ENCODE measurements at regions of chr5 and their contacts with region 1.

Region 1: GRCh38 chr5:179907570-179908324 is at the start of gene TBC1D9B:
- DNase-seq: peak; percentile 90
- ATAC-seq: peak; percentile 90
- total RNA-seq, gene TBC1D9B: 37.1 TPM

Region 2: DNA sequence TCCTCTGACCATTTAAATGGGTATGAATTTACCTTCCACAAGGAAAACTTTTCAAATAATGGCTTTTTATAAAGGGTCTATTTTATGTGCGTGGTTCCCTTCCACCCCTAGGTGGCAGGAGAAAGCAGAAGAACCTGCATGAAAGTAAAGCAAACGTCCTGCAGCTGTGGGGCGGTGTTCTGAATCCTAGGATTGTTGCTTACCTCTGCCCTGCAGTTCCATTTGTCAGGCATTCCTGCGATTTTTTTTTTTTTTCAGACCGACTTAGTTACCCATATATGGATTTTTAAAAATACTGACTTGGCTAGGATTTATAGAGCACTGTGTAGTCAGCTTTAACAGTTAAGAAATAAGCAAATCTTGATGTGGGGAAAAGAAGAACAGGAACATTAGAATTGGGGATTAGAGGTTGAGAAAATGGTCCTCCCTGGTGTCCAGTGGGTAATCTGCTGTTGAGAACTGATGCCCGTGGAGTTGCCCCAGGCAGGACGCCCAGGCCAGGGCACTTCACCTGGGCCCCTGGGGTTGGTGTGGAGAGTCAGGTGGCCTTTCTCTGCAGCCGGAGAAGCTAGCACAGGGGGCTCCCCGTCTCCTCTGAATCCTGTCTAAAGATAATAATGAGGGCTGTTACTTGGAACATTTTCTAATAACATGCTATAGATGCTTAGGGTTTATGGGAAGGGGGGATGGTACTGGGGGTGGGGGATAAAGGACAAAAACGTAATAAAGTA is 144.4 kb before region 1 on chr5:
- intact Hi-C with region 1: loop called (anchors 5 kb)
- DNase-seq: no peak
- ATAC-seq: no peak

Region 3: DNA sequence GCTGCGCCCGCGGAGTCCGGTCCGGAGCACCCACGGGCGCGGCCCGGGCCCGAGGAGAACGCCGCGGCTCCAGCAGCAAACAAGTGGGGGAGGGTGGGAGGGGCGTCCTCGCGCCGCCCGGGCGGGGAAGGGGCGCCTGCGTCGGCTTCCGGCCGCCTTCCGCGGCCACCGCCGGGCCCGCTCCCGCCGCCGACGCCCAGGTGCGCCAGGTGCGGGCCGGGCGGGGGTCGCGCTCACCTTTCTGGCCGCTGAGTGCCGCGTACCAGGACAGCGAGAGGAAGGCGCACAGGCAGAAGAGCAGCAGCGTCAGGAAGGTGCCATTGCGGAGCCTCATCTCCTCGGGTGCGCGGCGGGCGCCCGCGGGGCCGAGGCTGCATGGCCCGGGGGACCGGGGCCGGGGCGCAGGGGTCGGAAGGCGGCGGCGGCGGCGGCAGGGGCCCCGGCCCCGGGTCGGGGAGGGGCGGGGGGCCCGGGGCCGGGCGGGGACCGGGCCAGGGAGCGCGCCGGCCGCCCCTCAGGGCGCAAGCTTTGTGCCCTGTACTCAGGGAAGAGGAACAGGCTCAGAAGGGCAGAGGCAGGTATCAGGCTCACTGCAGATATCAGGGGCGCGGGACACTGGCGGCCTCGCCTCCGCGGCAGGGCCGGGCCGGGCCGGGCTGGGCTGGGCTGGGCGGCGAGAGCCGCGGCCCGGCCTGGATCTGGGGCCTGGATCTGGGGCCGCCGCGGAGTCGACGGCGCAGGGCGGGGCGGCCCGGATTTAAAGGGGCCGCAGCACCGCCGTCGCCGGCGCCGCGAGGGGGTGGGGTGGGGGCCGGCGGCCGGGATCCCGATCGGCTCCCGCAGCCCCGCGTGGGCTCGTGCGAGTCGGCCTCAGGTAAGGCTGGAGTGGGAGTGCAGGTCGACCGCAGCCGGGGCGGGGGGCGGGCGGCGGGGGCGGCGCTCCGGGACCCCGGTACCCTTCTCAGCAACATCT is 101.2 kb before region 1 on chr5 and contains the start of gene MGAT4B:
- intact Hi-C with region 1: loop called (anchors 5 kb)
- DNase-seq: peak; percentile 90
- ATAC-seq: peak; percentile 93
- total RNA-seq, gene MGAT4B: 98.9 TPM

Region 4: GRCh38 chr5:179817061-179817869 is 90.5 kb before region 1 on chr5:
- intact Hi-C with region 1: no loop called
- DNase-seq: peak; percentile 69
- ATAC-seq: no peak

Region 5: DNA sequence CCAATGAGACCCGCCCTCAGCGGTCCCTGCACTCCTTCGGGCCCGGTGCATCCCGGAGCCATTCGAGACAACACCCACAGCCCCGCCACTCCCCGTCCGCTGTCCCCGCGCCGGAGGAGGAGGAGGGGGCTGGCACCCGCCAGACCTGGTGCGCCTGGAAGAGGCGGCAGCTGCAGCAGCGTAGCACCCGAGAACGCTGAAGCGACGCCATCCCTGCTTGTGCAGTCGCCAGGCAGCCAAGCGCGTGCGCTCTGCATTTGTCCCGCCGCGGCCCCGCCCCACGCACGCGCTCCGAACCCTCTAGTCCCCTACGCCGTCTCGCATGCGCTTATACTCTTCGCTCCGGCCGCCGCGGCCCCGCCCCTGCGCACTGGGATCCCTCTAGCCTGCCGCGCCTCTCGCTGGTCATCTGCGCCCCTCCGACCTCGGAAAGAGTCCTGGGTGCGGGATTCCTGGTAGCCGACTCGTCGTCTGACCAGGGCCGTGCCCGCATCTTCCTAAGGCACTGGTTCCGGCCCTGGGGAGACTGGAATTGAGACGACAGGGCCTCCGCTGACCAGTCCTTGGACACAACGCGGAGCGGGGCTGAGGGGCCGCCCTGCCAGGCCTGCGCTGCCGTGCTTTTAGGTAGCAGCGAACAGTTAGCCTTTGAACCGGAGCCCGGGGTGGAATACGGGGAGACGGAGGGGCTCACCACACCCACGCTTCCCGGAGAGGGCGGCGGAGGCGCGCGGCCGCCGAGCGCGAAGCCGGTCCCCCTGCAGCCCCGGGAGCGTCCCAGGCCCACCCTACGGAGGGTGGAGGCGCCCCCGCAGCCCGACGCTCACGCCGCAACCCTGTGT is 48.9 kb before region 1 on chr5 and contains the start of gene MRNIP:
- intact Hi-C with region 1: loop called (anchors 1 kb)
- DNase-seq: peak; percentile 99
- ATAC-seq: peak; percentile 100
- total RNA-seq, gene MRNIP: 12.2 TPM

Region 6: DNA sequence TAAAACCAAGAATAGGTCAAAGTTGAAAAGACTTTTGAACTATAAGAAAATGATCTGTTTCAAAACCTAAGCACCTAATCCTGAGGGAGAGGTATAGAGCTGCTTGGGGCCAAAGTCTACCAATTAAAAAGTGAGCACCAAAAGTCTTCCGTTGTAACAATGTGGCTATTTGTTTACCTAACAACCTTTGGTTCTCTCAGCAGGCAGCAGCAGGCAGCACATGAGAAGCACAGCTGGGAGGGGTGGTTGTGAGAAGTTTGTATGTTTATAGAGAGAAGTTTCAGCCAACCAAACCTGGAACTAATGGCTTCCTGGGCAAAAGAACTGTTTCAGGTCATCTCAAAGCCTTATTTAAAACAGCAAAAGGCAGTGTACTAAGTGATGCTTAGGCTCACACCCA is 59.7 kb after region 1 on chr5:
- intact Hi-C with region 1: no loop called
- DNase-seq: no peak
- ATAC-seq: no peak

Region 7: DNA sequence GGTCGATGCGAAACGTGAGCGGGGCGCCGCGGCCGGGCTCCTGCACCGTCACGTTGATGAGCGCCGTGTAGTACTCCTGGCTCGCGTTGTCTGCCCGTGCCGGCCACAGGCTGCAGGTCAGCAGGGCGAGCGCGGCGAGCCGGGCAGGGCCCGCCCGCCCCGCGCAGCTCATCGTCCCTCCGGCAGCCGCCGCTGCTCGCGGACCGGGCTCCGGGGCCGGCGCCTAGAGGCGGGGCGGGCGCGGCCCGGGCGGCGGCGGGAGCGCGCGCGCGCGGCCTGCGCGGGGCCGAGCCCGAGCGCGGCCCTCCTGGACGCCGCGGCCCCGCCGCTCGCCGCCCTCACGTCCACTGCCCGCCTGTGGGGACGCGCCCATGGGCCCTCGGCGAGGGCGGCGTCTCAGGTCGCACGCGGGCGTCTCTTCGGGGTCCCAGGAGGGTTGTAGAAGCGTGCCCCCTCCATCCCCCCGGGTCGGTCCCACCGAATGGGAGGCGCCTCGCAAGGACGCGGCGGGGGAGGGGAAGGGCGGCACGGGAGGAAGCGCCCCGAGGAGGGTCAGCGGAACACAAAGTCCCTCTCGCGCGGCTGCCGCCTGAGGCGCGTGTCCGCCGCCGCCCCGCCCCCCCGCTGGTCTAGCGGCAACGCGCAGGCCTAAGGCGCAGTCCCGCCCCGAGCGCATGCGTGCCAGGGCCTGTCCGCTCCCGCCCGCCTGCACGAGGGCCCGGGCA is 163.9 kb after region 1 on chr5 and contains the start of gene RNF130:
- intact Hi-C with region 1: loop called (anchors 5 kb)
- DNase-seq: peak; percentile 98
- ATAC-seq: peak; percentile 97
- total RNA-seq, gene RNF130: 51.2 TPM

Region 8: DNA sequence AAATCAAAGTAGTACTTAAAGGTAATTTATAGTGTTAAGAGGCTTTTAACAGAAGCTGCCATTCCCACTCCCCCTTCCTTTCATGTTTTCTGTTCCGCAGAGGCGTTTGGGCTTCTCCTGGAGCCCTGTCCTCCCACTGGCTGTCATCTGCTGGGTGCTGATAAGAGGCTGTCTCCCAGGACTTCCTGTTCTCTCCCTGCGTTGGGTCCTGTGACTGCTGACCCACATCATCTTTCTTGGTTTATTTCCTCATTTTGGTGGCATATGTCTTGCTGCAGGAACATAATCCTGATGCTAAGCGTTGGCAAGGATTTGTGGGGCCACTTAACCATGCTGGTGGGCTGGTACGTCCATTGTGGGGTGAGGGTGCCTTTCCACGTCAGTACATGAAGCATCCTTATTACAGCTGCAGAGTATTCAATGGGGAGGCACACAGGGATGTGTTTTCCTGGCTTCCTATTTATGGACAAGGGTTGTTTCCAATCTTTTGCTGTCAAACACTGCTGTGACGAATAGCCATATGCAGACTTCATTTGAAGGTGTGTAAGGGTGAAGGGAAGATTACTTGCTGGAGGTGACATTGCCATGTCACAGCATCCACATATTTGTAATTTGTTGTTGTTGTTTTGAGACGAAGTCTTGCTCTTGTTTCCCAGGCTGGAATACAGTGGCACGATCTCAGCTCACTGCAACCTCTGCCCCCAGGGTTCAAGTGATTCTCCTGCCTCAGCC is 186.1 kb after region 1 on chr5:
- intact Hi-C with region 1: no loop called
- DNase-seq: no peak
- ATAC-seq: peak; percentile 47